ENCODE measurements at regions of chr17 and their contacts with region 1.

Region 1: GRCh38 chr17:45021607-45022287 is 29.7 kb downstream of the DCAKD start:
- DNase-seq: peak; percentile 67
- H3K4me3 ChIP-seq: peak overlapping the region; percentile 65
- H3K27ac ChIP-seq: peak overlapping the region; percentile 82
- H3K4me1 ChIP-seq: peaks cover 48% of the 10 kb centered on the region
- H3K27me3 ChIP-seq: peaks cover 9% of the 10 kb centered on the region
- CTCF ChIP-seq: peak; percentile 98

Region 2: DNA sequence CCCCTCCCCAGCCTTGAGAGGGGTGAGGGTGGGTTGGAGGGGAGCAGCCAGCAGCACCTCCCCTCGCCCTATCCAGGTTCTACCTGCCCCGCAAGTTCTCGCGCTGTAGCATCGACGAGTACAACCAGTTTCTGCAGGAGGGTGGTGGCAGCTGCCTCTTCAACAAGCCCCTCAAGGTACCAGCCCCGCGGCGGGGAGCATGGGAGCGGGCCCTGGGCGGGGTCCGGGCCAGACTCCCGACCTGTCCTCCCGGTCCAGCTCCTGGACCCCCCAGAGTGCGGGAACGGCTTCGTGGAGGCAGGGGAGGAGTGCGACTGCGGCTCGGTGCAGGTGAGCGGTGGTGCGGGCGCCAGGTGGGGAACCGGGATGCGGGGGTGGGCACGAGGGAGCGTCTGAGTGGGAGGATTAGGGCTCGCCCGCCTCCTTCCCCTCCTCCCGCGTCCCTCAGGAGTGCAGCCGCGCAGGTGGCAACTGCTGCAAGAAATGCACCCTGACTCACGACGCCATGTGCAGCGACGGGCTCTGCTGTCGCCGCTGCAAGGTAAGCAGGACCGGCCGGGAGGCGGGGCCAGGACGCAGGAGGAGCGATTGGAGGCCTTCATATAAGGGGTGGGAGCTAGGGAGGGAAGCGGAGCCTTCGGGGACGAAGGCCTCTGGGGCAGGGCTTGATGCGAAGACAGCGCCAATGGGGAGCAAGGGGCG is 246.5 kb before region 1 on chr17:
- intact Hi-C with region 1: loop called (anchors 10 kb)
- DNase-seq: peak; percentile 96
- H3K4me3 ChIP-seq: peak overlapping the region; percentile 79
- H3K27ac ChIP-seq: peak overlapping the region; percentile 60
- H3K4me1 ChIP-seq: peaks cover 36% of the 10 kb centered on the region
- H3K27me3 ChIP-seq: peaks cover 25% of the 10 kb centered on the region
- CTCF ChIP-seq: no peak

Region 3: DNA sequence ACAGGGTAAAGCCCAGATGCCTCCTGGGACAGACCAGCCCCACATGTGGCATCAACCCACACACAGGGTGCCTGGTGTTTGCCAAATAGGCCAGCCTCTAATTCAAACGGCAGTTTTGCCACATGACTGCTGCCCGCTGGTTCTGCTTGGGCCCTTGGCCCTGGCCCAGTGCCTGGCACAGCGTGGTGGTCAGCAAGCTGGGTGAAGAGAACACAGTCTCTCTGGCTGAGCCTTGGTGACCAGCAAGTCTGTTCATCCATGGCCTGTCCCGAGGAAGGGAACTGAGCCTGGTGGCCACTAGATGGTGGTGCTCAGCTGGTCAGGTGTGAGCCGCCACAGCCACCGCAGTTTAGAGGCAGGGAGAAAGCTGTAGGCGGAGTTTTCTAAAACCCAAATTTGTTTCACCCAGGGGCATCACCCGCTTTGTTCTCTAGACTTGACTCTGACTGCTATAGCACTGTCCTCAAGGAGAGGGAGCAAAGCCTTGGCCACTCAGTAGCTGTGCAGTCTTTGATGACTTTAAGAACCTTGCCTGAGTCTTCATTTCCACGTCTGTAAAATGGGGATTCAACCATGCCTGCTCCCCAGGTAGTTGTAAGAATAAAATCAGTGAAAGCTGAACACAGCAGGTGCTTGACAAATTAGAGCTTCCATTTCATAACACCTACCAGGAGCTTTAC is 101.7 kb before region 1 on chr17:
- intact Hi-C with region 1: loop called (anchors 1 kb)
- DNase-seq: peak; percentile 78
- H3K4me3 ChIP-seq: no peak overlapping the region
- H3K27ac ChIP-seq: peak overlapping the region; percentile 85
- H3K4me1 ChIP-seq: peaks cover 62% of the 10 kb centered on the region
- H3K27me3 ChIP-seq: peaks cover 6% of the 10 kb centered on the region
- CTCF ChIP-seq: peak; percentile 89

Region 4: GRCh38 chr17:44932496-44933097 is 89.2 kb before region 1 on chr17:
- intact Hi-C with region 1: no loop called
- DNase-seq: peak; percentile 13
- H3K4me3 ChIP-seq: peak overlapping the region; percentile 6
- H3K27ac ChIP-seq: peak overlapping the region; percentile 55
- H3K4me1 ChIP-seq: peaks cover 35% of the 10 kb centered on the region
- H3K27me3 ChIP-seq: no peaks in the 10 kb centered on the region
- CTCF ChIP-seq: no peak

Region 5: DNA sequence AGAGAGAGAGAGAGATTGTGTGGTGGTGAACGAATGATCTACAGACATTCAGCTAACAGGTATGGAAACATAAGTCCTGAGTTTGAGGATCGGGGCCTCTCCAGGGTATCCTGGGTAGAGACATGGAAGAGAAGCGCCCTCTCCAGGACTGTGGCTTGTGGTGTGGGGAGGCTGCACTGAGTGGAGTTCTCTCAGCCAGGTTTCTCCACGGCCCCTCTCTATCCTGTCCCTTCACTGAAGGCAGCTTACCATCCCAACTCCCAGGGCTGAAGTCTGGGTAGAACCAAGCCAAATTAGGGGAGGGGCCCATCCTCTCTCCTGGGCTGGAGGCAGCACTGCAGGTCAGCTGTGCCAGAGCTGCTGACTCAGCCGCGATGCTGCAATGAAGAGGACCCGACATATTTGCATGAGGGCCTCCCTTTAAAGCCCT is 59.8 kb before region 1 on chr17:
- intact Hi-C with region 1: no loop called
- DNase-seq: no peak
- H3K4me3 ChIP-seq: no peak overlapping the region
- H3K27ac ChIP-seq: no peak overlapping the region
- H3K4me1 ChIP-seq: peaks cover 2% of the 10 kb centered on the region
- H3K27me3 ChIP-seq: peaks cover 92% of the 10 kb centered on the region
- CTCF ChIP-seq: no peak

Region 6: GRCh38 chr17:45060797-45061605 is 39.3 kb after region 1 on chr17 and contains the start of gene NMT1:
- intact Hi-C with region 1: no loop called
- DNase-seq: peak; percentile 97
- H3K4me3 ChIP-seq: peak within 1 kb of the TSS; percentile 81
- H3K27ac ChIP-seq: peak within 1 kb of the TSS; percentile 94
- H3K4me1 ChIP-seq: peaks cover 67% of the 10 kb centered on the region
- H3K27me3 ChIP-seq: no peaks in the 10 kb centered on the region
- CTCF ChIP-seq: peak; percentile 24
- total RNA-seq, gene NMT1: 86.0 TPM

Region 7: GRCh38 chr17:45161019-45161825 is 139.5 kb after region 1 on chr17:
- intact Hi-C with region 1: no loop called
- DNase-seq: peak; percentile 98
- H3K4me3 ChIP-seq: peak overlapping the region; percentile 89
- H3K27ac ChIP-seq: peak overlapping the region; percentile 100
- H3K4me1 ChIP-seq: peaks cover 59% of the 10 kb centered on the region
- H3K27me3 ChIP-seq: no peaks in the 10 kb centered on the region
- CTCF ChIP-seq: no peak

Measured in left ventricle myocardium inferior (tissue), 1 donor.